Cardiac septum (tissue), 1 donor: ENCODE measurements at regions of chr2 and their contacts with region 1.

Region 1: GRCh38 chr2:218395797-218396687 is 3.6 kb upstream of the CTDSP1 start:
- DNase-seq: peak; percentile 97

Region 2: DNA sequence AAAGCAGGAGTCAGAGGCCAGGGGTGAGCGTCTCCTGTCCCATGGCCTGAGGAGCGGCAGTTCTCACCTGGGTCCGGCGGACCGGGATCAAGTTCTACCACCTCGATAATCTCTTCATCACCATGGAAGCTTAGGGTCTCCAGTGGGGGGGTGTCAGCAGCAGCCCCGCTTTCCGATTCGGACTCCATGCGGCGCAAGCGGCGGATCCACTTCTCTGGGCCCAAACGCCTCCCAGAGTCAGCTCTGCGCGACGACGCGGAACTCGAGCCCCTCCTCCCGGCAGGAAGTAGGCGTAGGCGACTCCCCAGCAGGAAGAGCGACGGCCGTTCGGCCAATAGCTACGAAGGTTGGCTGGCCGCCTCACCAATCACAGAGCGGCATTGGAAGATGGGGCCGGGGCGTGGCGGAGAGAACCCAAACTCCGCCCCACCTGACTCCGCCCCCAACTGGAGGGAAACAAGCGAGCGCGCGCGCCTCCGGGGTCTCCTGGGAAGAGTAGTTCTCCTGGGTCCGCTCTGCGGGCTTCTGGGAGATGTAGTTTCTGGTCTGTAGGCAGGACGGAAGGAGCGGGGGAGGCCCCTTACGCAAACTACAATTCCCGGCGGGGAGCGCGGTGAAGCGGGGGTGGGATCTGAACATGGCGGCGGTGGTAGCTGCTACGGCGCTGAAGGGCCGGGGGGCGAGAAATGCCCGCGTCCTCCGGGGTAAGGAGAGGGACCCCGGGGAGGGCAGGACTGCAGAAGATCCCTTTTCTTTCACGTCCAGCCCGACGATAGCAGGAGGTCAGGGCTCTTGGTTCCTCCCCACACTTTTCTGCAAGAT is 125.9 kb before region 1 on chr2 and contains the starts of genes AAMP and PNKD:
- intact Hi-C with region 1: loop called (anchors 5 kb)
- DNase-seq: peak; percentile 100
- total RNA-seq, gene AAMP: 56.3 TPM
- total RNA-seq, gene PNKD: 72.6 TPM

Region 3: DNA sequence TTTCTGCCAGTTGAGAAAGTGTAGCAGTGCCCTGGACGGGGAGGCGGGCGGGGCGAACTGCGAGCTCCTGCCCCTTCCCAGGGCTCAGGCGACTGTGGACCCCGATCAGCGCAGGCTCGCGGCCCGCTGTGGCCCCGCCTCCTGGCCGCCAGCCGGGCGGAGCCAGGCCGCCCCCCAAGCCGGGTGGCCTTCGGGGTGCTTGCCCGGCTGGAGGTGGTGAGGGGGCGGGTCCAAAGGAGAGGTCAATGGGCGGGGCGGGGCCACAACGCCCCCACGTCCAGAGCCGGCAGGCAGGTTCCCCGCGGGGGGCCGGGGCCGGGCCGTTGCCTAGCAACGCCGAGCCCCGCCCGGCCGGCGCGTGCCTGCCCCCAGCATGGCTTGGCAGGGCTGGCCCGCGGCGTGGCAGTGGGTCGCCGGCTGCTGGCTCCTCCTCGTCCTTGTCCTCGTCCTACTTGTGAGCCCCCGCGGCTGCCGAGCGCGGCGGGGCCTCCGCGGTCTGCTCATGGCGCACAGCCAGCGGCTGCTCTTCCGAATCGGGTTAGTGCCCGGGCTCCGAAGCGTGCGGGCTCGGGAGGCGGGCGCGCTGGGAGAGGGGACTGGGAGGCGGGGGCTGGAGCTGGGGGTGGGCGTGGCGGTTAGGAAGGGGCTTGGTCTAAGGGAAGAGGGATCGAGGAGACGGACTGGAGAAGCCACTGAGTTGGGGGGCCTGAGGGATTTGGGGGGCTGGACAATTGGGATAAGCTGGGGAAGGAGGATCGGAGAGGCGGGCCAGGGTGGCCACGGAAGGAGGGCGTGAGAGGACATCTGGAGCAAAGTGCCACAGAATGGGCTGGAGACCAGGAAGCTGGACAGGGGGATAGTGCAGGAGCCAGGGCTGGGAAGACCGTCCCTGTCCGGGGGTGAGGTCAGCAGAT is 72.9 kb before region 1 on chr2:
- intact Hi-C with region 1: loop called (anchors 2 kb)
- DNase-seq: peak; percentile 82

Region 4: GRCh38 chr2:218406209-218406948 is 10.3 kb after region 1 on chr2:
- intact Hi-C with region 1: loop called (anchors 1 kb)
- DNase-seq: peak; percentile 99